Calu3 (cell line): ENCODE measurements at regions of chr12 and their contacts with region 1.

Region 1: GRCh38 chr12:131673888-131674257 is 37.0 kb upstream of the SFSWAP start:
- DNase-seq: peak; percentile 35
- H3K4me3 Mint-ChIP-seq: no peak overlapping the region
- H3K27ac Mint-ChIP-seq: no peak overlapping the region
- H3K4me1 Mint-ChIP-seq: no peaks in the 10 kb centered on the region
- H3K27me3 Mint-ChIP-seq: peaks cover 93% of the 10 kb centered on the region
- CTCF ChIP-seq: no peak

Region 2: DNA sequence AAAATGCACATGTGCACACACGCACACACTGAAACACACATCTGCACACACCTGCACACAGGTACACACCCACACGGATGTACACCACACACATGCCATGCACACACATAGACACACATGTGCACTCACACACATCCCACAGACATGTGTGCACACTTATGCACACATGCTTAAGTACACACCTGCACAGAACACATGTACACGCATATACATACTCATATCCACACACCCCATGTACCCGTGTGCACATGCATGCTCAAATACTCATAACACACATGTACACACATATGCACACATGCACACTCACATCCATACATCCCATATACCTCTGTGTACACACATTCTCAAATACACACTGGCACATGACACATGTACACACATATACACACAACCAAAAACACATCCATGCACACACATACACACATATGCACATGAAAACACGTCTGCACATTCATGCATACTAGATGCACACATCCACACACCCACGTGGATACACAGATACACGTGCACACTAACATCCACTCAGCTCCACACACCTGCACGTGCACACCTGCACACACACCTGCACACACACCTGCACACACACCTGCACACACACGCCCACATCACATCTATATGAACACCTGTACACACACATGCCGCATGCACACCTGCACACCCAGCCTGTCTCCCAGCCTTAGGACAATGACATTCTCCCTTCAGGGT is 383.5 kb before region 1 on chr12:
- CTCF ChIA-PET with region 1: no interaction called
- intact Hi-C with region 1: loop called (anchors 5 kb)
- DNase-seq: no peak
- H3K4me3 Mint-ChIP-seq: no peak overlapping the region
- H3K27ac Mint-ChIP-seq: no peak overlapping the region
- H3K4me1 Mint-ChIP-seq: peaks cover 2% of the 10 kb centered on the region
- H3K27me3 Mint-ChIP-seq: peaks cover 37% of the 10 kb centered on the region
- CTCF ChIP-seq: no peak

Region 3: GRCh38 chr12:131608740-131609690 is 64.9 kb before region 1 on chr12:
- CTCF ChIA-PET with region 1: no interaction called
- intact Hi-C with region 1: loop called (anchors 2 kb)
- DNase-seq: peak; percentile 82
- H3K4me3 Mint-ChIP-seq: no peak overlapping the region
- H3K27ac Mint-ChIP-seq: no peak overlapping the region
- H3K4me1 Mint-ChIP-seq: no peaks in the 10 kb centered on the region
- H3K27me3 Mint-ChIP-seq: peaks cover 100% of the 10 kb centered on the region
- CTCF ChIP-seq: peak; percentile 88

Region 4: GRCh38 chr12:131634037-131634436 is 39.8 kb before region 1 on chr12:
- CTCF ChIA-PET with region 1: no interaction called
- intact Hi-C with region 1: no loop called
- DNase-seq: no peak
- H3K4me3 Mint-ChIP-seq: no peak overlapping the region
- H3K27ac Mint-ChIP-seq: no peak overlapping the region
- H3K4me1 Mint-ChIP-seq: no peaks in the 10 kb centered on the region
- H3K27me3 Mint-ChIP-seq: peaks cover 84% of the 10 kb centered on the region
- CTCF ChIP-seq: no peak

Region 5: GRCh38 chr12:131647643-131648042 is 26.2 kb before region 1 on chr12:
- CTCF ChIA-PET with region 1: no interaction called
- intact Hi-C with region 1: no loop called
- DNase-seq: no peak
- H3K4me3 Mint-ChIP-seq: no peak overlapping the region
- H3K27ac Mint-ChIP-seq: no peak overlapping the region
- H3K4me1 Mint-ChIP-seq: no peaks in the 10 kb centered on the region
- H3K27me3 Mint-ChIP-seq: peaks cover 93% of the 10 kb centered on the region
- CTCF ChIP-seq: no peak